Activated T-helper 1 cell treated with anti-CD3 and anti-CD28 coated beads, Interleukin-12 subunit alpha, Interleukin-12 subunit beta, Interleukin-2, Interleukin-4 antibody, amounts not matched to agents 30 ng/mL and 10 ng/mL and 1 ng/mL, durations not matched to agents 14 hours and 24 hours and 36 hours (primary cell): ENCODE measurements at regions of chr1 and their contacts with region 1.

Region 1: DNA sequence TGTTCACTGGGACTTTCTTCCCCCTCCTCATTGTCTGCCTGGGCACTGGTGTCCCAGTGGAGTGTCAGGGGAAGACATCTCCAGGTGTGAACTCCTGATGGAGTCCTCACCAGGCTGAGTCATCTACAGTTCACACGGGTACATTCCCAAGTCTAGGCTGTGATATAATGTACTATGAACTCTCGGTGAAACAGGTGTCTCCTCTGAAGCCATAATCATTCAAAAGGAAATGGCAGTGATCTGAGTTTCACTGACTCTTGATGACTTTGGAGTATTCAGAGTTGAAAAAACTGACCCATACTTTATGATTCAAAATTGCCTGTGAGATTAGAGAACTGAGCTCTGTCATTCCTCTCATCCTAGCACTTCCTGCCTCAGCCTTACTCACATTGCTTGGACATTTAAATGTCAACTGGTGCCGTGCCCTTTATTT is 9.1 kb downstream of the LAMC2 start:
- DNase-seq: no peak
- H3K4me3 Mint-ChIP-seq: peak overlapping the region; percentile 25
- H3K27ac Mint-ChIP-seq: peak overlapping the region; percentile 18
- H3K4me1 Mint-ChIP-seq: peaks cover 13% of the 10 kb centered on the region
- H3K27me3 Mint-ChIP-seq: peaks cover 2% of the 10 kb centered on the region

Region 2: DNA sequence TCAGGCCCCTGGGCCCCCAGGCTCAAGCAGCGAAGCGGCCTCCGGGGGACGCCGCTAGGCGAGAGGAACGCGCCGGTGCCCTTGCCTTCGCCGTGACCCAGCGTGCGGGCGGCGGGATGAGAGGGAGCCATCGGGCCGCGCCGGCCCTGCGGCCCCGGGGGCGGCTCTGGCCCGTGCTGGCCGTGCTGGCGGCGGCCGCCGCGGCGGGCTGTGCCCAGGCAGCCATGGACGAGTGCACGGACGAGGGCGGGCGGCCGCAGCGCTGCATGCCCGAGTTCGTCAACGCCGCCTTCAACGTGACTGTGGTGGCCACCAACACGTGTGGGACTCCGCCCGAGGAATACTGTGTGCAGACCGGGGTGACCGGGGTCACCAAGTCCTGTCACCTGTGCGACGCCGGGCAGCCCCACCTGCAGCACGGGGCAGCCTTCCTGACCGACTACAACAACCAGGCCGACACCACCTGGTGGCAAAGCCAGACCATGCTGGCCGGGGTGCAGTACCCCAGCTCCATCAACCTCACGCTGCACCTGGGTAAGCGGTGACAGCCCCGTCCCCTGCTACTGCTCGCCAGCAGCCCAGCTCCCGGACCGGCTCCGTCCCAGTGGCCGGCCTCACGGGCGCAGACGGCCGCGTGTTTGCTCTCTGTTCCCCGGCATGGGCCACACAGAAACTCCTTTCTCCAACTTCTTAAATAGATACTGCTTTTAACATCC is 171.4 kb before region 1 on chr1:
- intact Hi-C with region 1: loop called (anchors 5 kb)
- DNase-seq: peak; percentile 4
- H3K4me3 Mint-ChIP-seq: peak overlapping the region; percentile 83
- H3K27ac Mint-ChIP-seq: no peak overlapping the region
- H3K4me1 Mint-ChIP-seq: peaks cover 20% of the 10 kb centered on the region
- H3K27me3 Mint-ChIP-seq: peaks cover 78% of the 10 kb centered on the region

Region 3: GRCh38 chr1:183180634-183181056 is 14.5 kb before region 1 on chr1:
- intact Hi-C with region 1: loop called (anchors 2 kb)
- DNase-seq: peak; percentile 38
- H3K4me3 Mint-ChIP-seq: no peak overlapping the region
- H3K27ac Mint-ChIP-seq: peak overlapping the region; percentile 64
- H3K4me1 Mint-ChIP-seq: peaks cover 12% of the 10 kb centered on the region
- H3K27me3 Mint-ChIP-seq: peaks cover 5% of the 10 kb centered on the region